ENCODE measurements at regions of chr1 and their contacts with region 1.

Region 1: DNA sequence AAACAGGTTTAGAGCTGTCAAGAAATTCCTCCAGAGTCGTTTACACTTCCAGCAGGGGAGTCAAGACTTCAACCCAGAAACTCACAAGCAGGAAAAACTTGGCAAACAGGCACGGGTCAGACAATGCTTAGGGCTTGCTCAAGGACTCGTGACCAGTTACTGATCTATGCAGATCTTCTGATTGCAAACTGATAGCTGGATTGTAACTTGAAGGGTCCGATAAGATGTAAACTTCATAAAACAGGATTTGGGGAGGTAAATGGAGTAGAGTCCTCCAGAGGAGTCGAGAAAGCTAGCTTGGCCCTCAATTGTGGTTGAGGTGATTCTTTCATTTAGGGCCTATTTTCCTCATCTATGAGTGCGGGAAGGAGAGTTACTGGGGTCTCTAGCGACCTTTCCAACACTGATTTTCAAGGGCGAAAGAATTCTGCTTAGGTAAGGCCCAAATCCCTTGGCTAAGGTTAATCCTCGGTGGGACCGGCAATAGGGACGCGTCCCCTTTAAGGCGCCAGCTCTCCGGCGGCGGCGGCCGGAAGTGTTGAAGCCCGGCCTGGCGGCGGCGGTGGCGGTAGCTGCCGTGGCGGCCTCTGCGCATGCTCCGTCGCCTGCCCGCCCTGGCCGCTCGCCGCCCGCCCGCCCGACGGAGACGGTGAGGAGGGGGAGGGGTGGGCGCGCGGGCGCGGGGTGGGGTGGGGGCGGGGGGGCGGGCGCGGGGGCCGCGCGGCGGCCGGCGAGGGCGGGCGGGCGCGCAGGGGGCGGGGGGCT is at the start of gene GMEB1:
- DNase-seq: peak; percentile 93
- H3K4me3 ChIP-seq: peak within 1 kb of the TSS; percentile 87
- H3K27ac ChIP-seq: peak within 1 kb of the TSS; percentile 96
- H3K4me1 ChIP-seq: peaks cover 9% of the 10 kb centered on the region
- H3K27me3 ChIP-seq: no peaks in the 10 kb centered on the region
- CTCF ChIP-seq: no peak
- total RNA-seq, gene GMEB1: 20.9 and 23.0 TPM in 2 replicates

Region 2: GRCh38 chr1:28480308-28480707 is 188.1 kb before region 1 on chr1:
- CTCF ChIA-PET with region 1: no interaction called
- POLR2A ChIA-PET with region 1: interaction called, 11 read pairs
- intact Hi-C with region 1: no loop called
- DNase-seq: no peak
- H3K4me3 ChIP-seq: no peak overlapping the region
- H3K27ac ChIP-seq: no peak overlapping the region
- H3K4me1 ChIP-seq: no peaks in the 10 kb centered on the region
- H3K27me3 ChIP-seq: no peaks in the 10 kb centered on the region
- CTCF ChIP-seq: no peak

Region 3: DNA sequence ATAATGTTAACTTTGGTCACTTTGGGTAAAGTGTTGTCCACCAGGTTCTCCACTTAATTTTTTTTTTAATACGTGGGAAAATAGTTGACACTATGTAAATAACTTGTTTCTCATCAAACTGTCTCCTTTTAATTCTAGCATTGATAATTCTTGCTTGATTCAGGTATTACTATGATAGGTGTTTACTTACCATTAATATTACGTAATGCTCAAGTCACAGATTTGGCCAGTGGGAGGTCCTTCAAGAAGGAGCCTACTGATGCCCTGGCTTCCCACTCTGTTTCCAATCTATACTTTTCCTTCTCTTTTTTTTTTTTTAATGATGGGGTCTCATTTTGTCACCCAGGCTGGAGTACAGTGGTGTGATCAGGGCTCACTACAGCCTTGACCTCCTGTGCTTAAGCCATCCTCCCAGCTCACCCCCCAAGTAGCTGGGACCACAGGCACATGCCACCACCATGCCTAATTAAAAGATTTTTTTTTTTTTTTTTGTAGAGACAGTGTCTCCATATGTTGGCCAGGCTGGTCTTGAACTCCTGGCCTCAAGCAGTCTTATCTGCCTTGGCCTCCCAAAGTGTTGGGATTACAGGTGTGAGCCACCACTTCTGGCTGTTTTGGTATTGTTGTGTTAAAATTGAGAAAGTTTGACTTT is 98.3 kb after region 1 on chr1:
- CTCF ChIA-PET with region 1: no interaction called
- POLR2A ChIA-PET with region 1: no interaction called
- intact Hi-C with region 1: no loop called
- DNase-seq: no peak
- H3K4me3 ChIP-seq: no peak overlapping the region
- H3K27ac ChIP-seq: no peak overlapping the region
- H3K4me1 ChIP-seq: no peaks in the 10 kb centered on the region
- H3K27me3 ChIP-seq: no peaks in the 10 kb centered on the region
- CTCF ChIP-seq: no peak

Region 4: DNA sequence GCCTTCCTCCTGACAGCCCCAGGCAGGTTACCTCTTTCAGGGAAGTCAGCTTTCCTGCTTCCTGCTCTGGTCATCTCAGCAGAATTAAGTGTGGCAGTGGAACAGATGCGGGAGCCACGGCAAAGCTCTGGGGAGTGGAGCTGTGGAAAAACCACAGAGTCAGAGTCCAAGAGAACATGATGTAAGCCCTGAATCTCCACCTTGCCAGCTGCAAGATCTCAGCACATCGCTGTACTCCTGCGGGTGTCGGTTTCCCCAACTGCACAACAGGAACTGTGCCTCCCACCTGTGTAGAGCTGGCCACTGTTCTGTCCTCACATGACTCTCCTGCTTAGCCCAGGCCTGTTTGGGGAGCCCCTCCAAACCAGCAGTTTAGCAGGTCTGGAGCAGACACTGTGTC is 1931.3 kb after region 1 on chr1:
- CTCF ChIA-PET with region 1: no interaction called
- POLR2A ChIA-PET with region 1: interaction called, 15 read pairs
- intact Hi-C with region 1: no loop called
- DNase-seq: no peak
- H3K4me3 ChIP-seq: no peak overlapping the region
- H3K27ac ChIP-seq: no peak overlapping the region
- H3K4me1 ChIP-seq: no peaks in the 10 kb centered on the region
- H3K27me3 ChIP-seq: peaks cover 9% of the 10 kb centered on the region
- CTCF ChIP-seq: no peak

Measured in A673 (cell line).